ENCODE measurements at regions of chr4 and their contacts with region 1.

Region 1: GRCh38 chr4:153398713-153399112 is 54.2 kb downstream of the MND1 start:
- DNase-seq: peak in 7 of 9 donors; percentile 7 to 72 (median 45)
- ATAC-seq: peak; percentile 62
- H3K4me3 ChIP-seq: no peak overlapping the region
- H3K4me3 Mint-ChIP-seq: peak overlapping the region in 5 of 10 donors; percentile 16 to 47 (median 42)
- H3K27ac ChIP-seq: peak overlapping the region; percentile 18
- H3K27ac Mint-ChIP-seq: peak overlapping the region in 8 of 9 donors; percentile 73 to 93 (median 86)
- H3K4me1 ChIP-seq: peaks cover 0 to 16% of the 10 kb centered on the region in 2 donors
- H3K4me1 Mint-ChIP-seq: peaks cover 2 to 24% (median 20%) of the 10 kb centered on the region in 7 donors
- H3K27me3 ChIP-seq: no peaks in the 10 kb centered on the region
- H3K27me3 Mint-ChIP-seq: no peaks in the 10 kb centered on the region

Region 2: GRCh38 chr4:153362184-153362583 is 36.5 kb before region 1 on chr4:
- CTCF ChIA-PET with region 1: no interaction called
- POLR2A ChIA-PET with region 1: no interaction called
- intact Hi-C with region 1: loop called in 1 of 2 experiments (anchors 5 kb)
- DNase-seq: no peak
- ATAC-seq: no peak
- H3K4me3 ChIP-seq: no peak overlapping the region
- H3K4me3 Mint-ChIP-seq: no peak overlapping the region
- H3K27ac ChIP-seq: no peak overlapping the region
- H3K27ac Mint-ChIP-seq: no peak overlapping the region
- H3K4me1 ChIP-seq: no peaks in the 10 kb centered on the region
- H3K4me1 Mint-ChIP-seq: peaks cover 0 to 6% (median 4%) of the 10 kb centered on the region in 7 donors
- H3K27me3 ChIP-seq: no peaks in the 10 kb centered on the region
- H3K27me3 Mint-ChIP-seq: no peaks in the 10 kb centered on the region

Region 3: DNA sequence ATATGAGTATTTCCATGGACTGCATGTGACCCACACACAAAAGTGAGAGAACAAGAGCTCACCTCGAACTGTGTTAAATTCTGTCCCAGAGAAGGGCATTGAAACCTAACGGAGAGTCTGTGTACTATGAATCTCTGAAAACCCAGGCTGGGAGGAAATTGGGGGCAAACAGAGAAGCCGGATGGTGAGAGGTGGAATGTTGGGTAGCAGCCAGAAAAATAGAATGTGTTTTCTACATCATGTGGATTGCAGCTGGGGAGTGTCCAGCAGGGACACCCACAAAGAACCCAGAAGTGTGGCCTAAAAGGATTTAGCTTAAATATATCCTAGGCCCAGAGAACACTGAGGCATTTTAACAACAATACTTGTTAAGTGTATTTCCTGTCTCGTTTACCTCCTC is 15.6 kb before region 1 on chr4:
- CTCF ChIA-PET with region 1: no interaction called
- POLR2A ChIA-PET with region 1: interaction called, 10 read pairs
- intact Hi-C with region 1: no loop called
- DNase-seq: no peak
- ATAC-seq: no peak
- H3K4me3 ChIP-seq: no peak overlapping the region
- H3K4me3 Mint-ChIP-seq: no peak overlapping the region
- H3K27ac ChIP-seq: no peak overlapping the region
- H3K27ac Mint-ChIP-seq: peak overlapping the region in 1 of 9 donors; percentile 28
- H3K4me1 ChIP-seq: no peaks in the 10 kb centered on the region
- H3K4me1 Mint-ChIP-seq: peaks cover 0 to 2% (median 0%) of the 10 kb centered on the region in 7 donors
- H3K27me3 ChIP-seq: no peaks in the 10 kb centered on the region
- H3K27me3 Mint-ChIP-seq: no peaks in the 10 kb centered on the region

Region 4: GRCh38 chr4:153409412-153409811 is 10.7 kb after region 1 on chr4:
- CTCF ChIA-PET with region 1: interaction called, 5 read pairs
- POLR2A ChIA-PET with region 1: interaction called, 10 read pairs
- intact Hi-C with region 1: loop called in 1 of 2 experiments (anchors 2 kb)
- DNase-seq: no peak
- ATAC-seq: no peak
- H3K4me3 ChIP-seq: no peak overlapping the region
- H3K4me3 Mint-ChIP-seq: no peak overlapping the region
- H3K27ac ChIP-seq: no peak overlapping the region
- H3K27ac Mint-ChIP-seq: no peak overlapping the region
- H3K4me1 ChIP-seq: peaks cover 0 to 3% of the 10 kb centered on the region in 2 donors
- H3K4me1 Mint-ChIP-seq: peaks cover 2 to 22% (median 13%) of the 10 kb centered on the region in 7 donors
- H3K27me3 ChIP-seq: no peaks in the 10 kb centered on the region
- H3K27me3 Mint-ChIP-seq: no peaks in the 10 kb centered on the region

Region 5: DNA sequence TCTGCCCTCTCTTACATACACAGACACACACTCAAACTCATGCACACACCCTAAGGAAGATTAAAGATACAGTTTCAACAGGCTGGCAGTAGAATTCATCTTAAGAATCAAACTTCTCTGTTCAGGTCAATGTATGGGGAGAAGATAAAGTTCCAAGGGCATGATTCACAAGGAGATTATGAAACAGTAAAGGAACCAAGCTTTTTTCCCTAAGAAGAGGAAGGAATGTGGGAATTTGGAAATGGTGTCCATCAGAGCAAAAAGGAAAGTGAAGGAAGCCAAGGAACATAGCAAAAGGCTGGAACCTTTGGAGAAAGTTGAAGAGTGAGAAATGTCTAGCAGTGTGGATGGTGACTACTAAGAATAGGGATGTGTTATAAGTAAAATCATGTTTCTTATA is 1618.7 kb after region 1 on chr4:
- CTCF ChIA-PET with region 1: no interaction called
- POLR2A ChIA-PET with region 1: no interaction called
- intact Hi-C with region 1: no loop called
- DNase-seq: no peak
- ATAC-seq: no peak
- H3K4me3 ChIP-seq: no peak overlapping the region
- H3K4me3 Mint-ChIP-seq: no peak overlapping the region
- H3K27ac ChIP-seq: no peak overlapping the region
- H3K27ac Mint-ChIP-seq: no peak overlapping the region
- H3K4me1 ChIP-seq: no peaks in the 10 kb centered on the region
- H3K4me1 Mint-ChIP-seq: no peaks in the 10 kb centered on the region
- H3K27me3 ChIP-seq: no peaks in the 10 kb centered on the region
- H3K27me3 Mint-ChIP-seq: peaks cover 0 to 18% (median 6%) of the 10 kb centered on the region in 5 donors

Measured in naive thymus-derived CD4-positive, alpha-beta T cell (primary cell).